Breast epithelium (tissue), 4 donors: ENCODE measurements at regions of chr17 and their contacts with region 1.

Region 1: GRCh38 chr17:4407851-4408250 is 25.9 kb upstream of the SPNS3 start:
- DNase-seq: peak in 1 of 2 donors; percentile 62
- H3K4me3 ChIP-seq: no peak overlapping the region
- H3K27ac ChIP-seq: peak overlapping the region in 1 of 2 donors; percentile 14
- H3K4me1 ChIP-seq: no peaks in the 10 kb centered on the region
- H3K27me3 ChIP-seq: no peaks in the 10 kb centered on the region
- CTCF ChIP-seq: no peak
- POLR2A ChIP-seq: no peak

Region 2: GRCh38 chr17:3965118-3965803 is 442.6 kb before region 1 on chr17:
- intact Hi-C with region 1: loop called (anchors 5 kb)
- DNase-seq: peak in 1 of 2 donors; percentile 43
- H3K4me3 ChIP-seq: peak overlapping the region; percentile 42 to 69 (median 62)
- H3K27ac ChIP-seq: peak overlapping the region in 1 of 2 donors; percentile 66
- H3K4me1 ChIP-seq: peaks cover 0 to 7% of the 10 kb centered on the region in 2 donors
- H3K27me3 ChIP-seq: peaks cover 0 to 9% of the 10 kb centered on the region in 2 donors
- CTCF ChIP-seq: no peak
- POLR2A ChIP-seq: no peak

Region 3: GRCh38 chr17:4219241-4219640 is 188.6 kb before region 1 on chr17:
- intact Hi-C with region 1: loop called (anchors 2 kb)
- DNase-seq: no peak
- H3K4me3 ChIP-seq: no peak overlapping the region
- H3K27ac ChIP-seq: no peak overlapping the region
- H3K4me1 ChIP-seq: no peaks in the 10 kb centered on the region
- H3K27me3 ChIP-seq: no peaks in the 10 kb centered on the region
- CTCF ChIP-seq: no peak
- POLR2A ChIP-seq: no peak

Region 4: DNA sequence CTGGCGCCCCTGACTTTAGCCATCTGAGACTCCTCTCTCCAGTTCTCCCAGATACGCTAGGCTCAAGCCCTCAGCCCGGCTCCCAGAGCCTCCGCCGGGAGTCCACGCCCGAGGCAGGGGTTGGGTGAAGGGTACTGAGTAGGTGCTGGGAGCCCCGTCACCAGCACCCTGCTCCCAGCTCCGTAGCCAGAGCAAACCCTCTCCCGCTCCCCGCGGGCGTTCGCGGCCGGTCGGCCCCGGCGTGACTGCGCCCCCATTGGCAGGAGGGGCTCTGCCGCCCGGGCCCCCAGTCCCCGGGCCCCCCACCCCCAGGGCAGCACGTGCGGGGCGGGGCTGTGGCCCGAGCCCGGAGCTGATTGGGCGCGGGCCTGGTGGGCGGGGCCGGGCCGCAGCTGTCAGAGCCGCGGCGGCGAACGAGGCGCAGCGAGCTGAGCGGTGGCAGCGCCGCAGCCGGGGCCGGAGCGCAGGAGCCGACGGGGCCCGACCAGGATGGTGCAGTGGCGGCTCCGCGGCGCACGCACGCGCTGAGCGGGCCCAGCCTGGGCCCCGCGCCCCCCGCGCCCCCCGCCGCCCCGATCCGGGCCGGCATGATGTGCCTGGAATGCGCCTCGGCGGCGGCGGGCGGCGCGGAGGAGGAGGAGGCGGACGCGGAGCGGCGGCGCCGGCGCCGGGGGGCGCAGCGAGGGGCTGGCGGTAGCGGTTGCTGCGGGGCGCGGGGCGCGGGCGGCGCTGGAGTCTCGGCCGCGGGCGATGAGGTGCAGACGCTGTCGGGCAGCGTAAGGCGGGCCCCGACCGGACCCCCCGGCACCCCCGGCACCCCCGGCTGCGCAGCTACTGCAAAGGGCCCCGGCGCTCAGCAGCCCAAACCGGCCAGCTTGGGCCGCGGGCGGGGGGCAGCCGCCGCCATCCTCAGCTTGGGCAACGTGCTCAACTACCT is 90.9 kb after region 1 on chr17 and contains the start of gene SPNS2:
- intact Hi-C with region 1: no loop called
- DNase-seq: no peak
- H3K4me3 ChIP-seq: peak within 1 kb of the TSS; percentile 48 to 62 (median 50)
- H3K27ac ChIP-seq: peak within 1 kb of the TSS; percentile 10 to 35
- H3K4me1 ChIP-seq: peaks cover 0 to 6% of the 10 kb centered on the region in 2 donors
- H3K27me3 ChIP-seq: peaks cover 11 to 28% of the 10 kb centered on the region in 2 donors
- CTCF ChIP-seq: no peak
- POLR2A ChIP-seq: no peak
- total RNA-seq, gene SPNS2: 5.3 to 14.1 (median 11.5) TPM

Region 5: GRCh38 chr17:4509401-4509800 is 101.5 kb after region 1 on chr17:
- intact Hi-C with region 1: no loop called
- DNase-seq: peak in 1 of 2 donors; percentile 70
- H3K4me3 ChIP-seq: peak overlapping the region in 1 of 3 donors; percentile 2
- H3K27ac ChIP-seq: peak overlapping the region; percentile 80 to 86
- H3K4me1 ChIP-seq: peaks cover 0 to 29% of the 10 kb centered on the region in 2 donors
- H3K27me3 ChIP-seq: no peaks in the 10 kb centered on the region
- CTCF ChIP-seq: peak in 1 of 3 donors; percentile 30
- POLR2A ChIP-seq: no peak